ENCODE measurements at regions of chr2 and their contacts with region 1.

Region 1: GRCh38 chr2:157443795-157444640 is at the start of gene CYTIP:
- DNase-seq: peak; percentile 88
- ATAC-seq: peak; percentile 58
- H3K4me3 ChIP-seq: peak within 1 kb of the TSS; percentile 82 to 98 (median 92)
- H3K4me3 Mint-ChIP-seq: peak within 1 kb of the TSS; percentile 94
- H3K27ac ChIP-seq: peak within 1 kb of the TSS; percentile 93 to 96
- H3K27ac Mint-ChIP-seq: peak within 1 kb of the TSS; percentile 95
- H3K4me1 ChIP-seq: peaks cover 40 to 43% of the 10 kb centered on the region in 2 donors
- H3K4me1 Mint-ChIP-seq: peaks cover 39% of the 10 kb centered on the region
- H3K27me3 ChIP-seq: no peaks in the 10 kb centered on the region
- H3K27me3 Mint-ChIP-seq: no peaks in the 10 kb centered on the region
- CTCF ChIP-seq: no peak
- total RNA-seq, gene CYTIP: 327 and 358 TPM in 2 replicates

Region 2: DNA sequence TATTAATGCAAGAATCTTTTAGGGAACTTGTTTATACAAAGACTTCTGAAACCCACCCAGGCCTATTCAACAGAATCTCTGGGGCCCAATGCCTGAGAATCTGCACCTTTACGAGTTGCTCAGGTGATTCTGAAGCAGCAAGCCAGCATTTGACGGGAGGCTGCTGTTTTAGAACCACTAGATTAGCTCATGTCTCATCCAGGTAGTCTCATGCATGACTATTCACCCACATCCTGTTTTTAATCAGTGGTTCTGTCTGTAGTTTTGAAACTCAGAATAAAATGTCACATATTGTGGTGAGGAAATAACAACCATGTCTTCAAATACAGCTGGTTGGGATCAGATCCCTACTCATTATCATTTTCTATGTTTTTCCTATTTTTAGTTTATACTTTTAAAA is 39.7 kb before region 1 on chr2:
- CTCF ChIA-PET with region 1: interaction called, 13 read pairs
- POLR2A ChIA-PET with region 1: interaction called, 29 read pairs
- intact Hi-C with region 1: loop called (anchors 2 kb)
- DNase-seq: peak; percentile 91
- ATAC-seq: peak; percentile 91
- H3K4me3 ChIP-seq: peak overlapping the region in 1 of 5 experiments; percentile 46
- H3K4me3 Mint-ChIP-seq: peak overlapping the region; percentile 68
- H3K27ac ChIP-seq: peak overlapping the region; percentile 67 to 86
- H3K27ac Mint-ChIP-seq: peak overlapping the region; percentile 92
- H3K4me1 ChIP-seq: peaks cover 29% of the 10 kb centered on the region in 2 donors
- H3K4me1 Mint-ChIP-seq: peaks cover 51% of the 10 kb centered on the region
- H3K27me3 ChIP-seq: no peaks in the 10 kb centered on the region
- H3K27me3 Mint-ChIP-seq: no peaks in the 10 kb centered on the region
- CTCF ChIP-seq: no peak

Region 3: GRCh38 chr2:157420771-157421323 is 23.2 kb before region 1 on chr2:
- CTCF ChIA-PET with region 1: interaction called, 16 read pairs
- POLR2A ChIA-PET with region 1: interaction called, 27 read pairs
- intact Hi-C with region 1: loop called (anchors 2 kb)
- DNase-seq: peak; percentile 77
- ATAC-seq: peak; percentile 71
- H3K4me3 ChIP-seq: no peak overlapping the region
- H3K4me3 Mint-ChIP-seq: peak overlapping the region; percentile 78
- H3K27ac ChIP-seq: peak overlapping the region; percentile 58 to 88
- H3K27ac Mint-ChIP-seq: peak overlapping the region; percentile 94
- H3K4me1 ChIP-seq: peaks cover 49 to 52% of the 10 kb centered on the region in 2 donors
- H3K4me1 Mint-ChIP-seq: peaks cover 57% of the 10 kb centered on the region
- H3K27me3 ChIP-seq: no peaks in the 10 kb centered on the region
- H3K27me3 Mint-ChIP-seq: no peaks in the 10 kb centered on the region
- CTCF ChIP-seq: no peak

Region 4: DNA sequence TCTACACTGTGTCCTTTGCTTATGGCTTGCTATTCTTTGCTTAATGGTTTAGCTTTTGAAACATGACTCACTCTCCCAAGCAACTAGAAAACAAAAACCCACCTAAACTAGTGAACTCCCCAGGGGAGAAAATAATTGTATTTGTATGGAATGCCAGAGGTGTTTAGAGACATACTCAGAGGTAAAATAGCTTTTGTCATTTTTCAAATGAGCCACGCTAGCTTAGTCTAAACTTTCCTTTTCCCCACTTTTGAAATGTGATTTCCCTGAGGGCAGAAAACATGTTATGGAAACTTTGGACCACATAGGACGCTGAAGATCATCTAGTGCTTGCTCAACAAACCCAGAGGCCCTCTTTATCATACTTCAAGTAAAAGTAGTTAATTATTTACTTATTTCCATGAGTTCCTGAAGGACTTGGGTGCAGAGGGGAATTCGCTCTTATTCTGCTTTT is 16.4 kb after region 1 on chr2:
- CTCF ChIA-PET with region 1: interaction called, 11 read pairs
- POLR2A ChIA-PET with region 1: interaction called, 3 read pairs
- intact Hi-C with region 1: loop called (anchors 1 kb)
- DNase-seq: no peak
- ATAC-seq: no peak
- H3K4me3 ChIP-seq: no peak overlapping the region
- H3K4me3 Mint-ChIP-seq: no peak overlapping the region
- H3K27ac ChIP-seq: no peak overlapping the region
- H3K27ac Mint-ChIP-seq: no peak overlapping the region
- H3K4me1 ChIP-seq: peaks cover 7% of the 10 kb centered on the region in 2 donors
- H3K4me1 Mint-ChIP-seq: peaks cover 16% of the 10 kb centered on the region
- H3K27me3 ChIP-seq: no peaks in the 10 kb centered on the region
- H3K27me3 Mint-ChIP-seq: no peaks in the 10 kb centered on the region
- CTCF ChIP-seq: no peak

Measured in B cell (primary cell).